ENCODE measurements at regions of chr17 and their contacts with region 1.

Region 1: DNA sequence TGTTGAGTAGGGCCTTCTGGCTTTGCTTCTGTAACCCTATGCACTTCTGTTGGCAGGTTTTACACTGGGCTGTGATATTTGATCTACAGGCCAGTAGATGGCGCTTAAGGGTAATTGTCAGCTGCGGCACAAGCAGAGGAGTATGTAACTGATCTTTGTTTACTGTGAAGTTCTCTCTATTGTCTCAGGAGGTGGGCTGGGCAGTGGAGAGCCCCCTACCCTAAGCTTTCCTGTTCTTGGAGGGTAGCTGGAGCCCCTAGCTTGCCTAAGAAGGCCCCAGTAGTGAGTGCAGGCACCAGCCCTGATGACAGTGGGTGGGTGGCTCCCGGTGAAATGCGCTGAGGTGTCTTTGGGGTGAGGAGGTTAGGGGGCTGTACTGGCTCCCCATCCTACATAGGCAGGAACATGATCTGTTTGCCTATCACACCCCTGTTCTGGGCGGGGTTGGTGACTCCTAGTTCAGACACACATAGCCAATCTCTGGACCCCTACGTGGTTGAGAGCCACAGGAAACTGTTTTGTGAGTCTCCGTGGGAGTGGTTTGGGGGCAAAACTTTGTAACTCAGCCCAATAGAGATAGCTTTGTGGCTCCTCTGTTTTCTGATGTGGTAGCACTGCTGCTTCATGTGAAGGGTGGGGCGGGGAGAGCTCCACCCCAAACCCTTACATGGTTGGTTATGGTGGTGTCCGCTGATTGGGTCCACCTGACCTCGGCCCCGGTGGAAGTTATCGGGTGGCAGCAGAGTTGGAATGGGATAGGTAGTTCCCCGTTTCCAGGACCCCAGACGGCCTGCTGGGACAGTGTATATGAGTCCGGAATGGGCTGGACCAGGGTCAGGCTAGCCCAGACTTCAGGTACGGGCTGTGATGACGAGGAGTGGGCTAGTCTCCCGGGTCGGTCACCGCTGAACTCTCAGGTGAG is 60.4 kb downstream of the SLFN11 start:
- DNase-seq: peak; percentile 77 to 99 (median 88)
- ATAC-seq: peak; percentile 92
- H3K4me3 ChIP-seq: peak overlapping the region; percentile 73 to 84
- H3K4me3 Mint-ChIP-seq: peak overlapping the region; percentile 97
- H3K27ac ChIP-seq: peak overlapping the region; percentile 75 to 86
- H3K27ac Mint-ChIP-seq: peak overlapping the region; percentile 98
- H3K4me1 ChIP-seq: peaks cover 26% of the 10 kb centered on the region
- H3K4me1 Mint-ChIP-seq: peaks cover 57% of the 10 kb centered on the region
- H3K27me3 ChIP-seq: no peaks in the 10 kb centered on the region
- H3K27me3 Mint-ChIP-seq: no peaks in the 10 kb centered on the region
- CTCF ChIP-seq: peak; percentile 88

Region 2: DNA sequence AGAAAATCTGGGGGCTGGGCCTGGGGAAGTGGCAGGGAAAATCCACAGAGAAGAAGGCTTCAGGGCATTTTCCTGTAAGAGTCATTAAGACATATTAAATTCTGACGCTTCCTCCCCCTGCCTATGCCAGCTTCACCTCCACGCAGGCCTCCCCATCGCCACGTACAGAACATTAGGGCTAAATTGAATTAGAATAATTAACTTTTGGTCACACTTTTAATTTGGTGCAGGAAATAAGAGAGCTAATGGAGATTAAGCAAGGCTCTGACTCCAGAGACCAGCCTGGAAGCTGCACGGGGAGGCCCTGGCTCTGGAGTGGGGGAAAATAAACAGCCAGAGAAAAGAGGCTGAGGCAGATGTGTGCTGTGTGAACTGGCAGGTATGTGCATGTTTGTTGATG is 499.8 kb before region 1 on chr17:
- CTCF ChIA-PET with region 1: no interaction called
- POLR2A ChIA-PET with region 1: no interaction called
- intact Hi-C with region 1: no loop called
- DNase-seq: no peak
- ATAC-seq: no peak
- H3K4me3 ChIP-seq: no peak overlapping the region
- H3K4me3 Mint-ChIP-seq: no peak overlapping the region
- H3K27ac ChIP-seq: no peak overlapping the region
- H3K27ac Mint-ChIP-seq: no peak overlapping the region
- H3K4me1 ChIP-seq: no peaks in the 10 kb centered on the region
- H3K4me1 Mint-ChIP-seq: no peaks in the 10 kb centered on the region
- H3K27me3 ChIP-seq: no peaks in the 10 kb centered on the region
- H3K27me3 Mint-ChIP-seq: no peaks in the 10 kb centered on the region
- CTCF ChIP-seq: no peak

Region 3: DNA sequence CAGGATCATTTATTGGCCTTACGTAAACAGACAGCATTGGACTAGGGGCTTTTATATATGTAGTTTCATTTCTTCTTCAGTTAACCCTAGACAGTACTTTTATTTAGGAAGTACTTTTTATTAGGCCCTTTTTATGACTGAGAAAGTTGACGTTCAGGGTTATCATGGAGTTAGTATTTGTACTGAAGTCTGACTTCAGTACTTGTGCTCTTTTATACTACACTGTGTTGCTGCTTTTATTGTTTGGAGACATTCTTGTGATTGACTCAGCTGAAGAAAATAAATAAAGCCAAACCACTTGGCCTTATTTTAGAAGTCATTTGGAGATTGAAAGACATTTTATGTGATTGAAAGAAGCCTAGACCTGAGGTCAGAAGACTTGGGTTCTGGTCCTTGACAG is 325.8 kb before region 1 on chr17:
- CTCF ChIA-PET with region 1: no interaction called
- POLR2A ChIA-PET with region 1: no interaction called
- intact Hi-C with region 1: no loop called
- DNase-seq: no peak
- ATAC-seq: no peak
- H3K4me3 ChIP-seq: no peak overlapping the region
- H3K4me3 Mint-ChIP-seq: no peak overlapping the region
- H3K27ac ChIP-seq: no peak overlapping the region
- H3K27ac Mint-ChIP-seq: no peak overlapping the region
- H3K4me1 ChIP-seq: peaks cover 7% of the 10 kb centered on the region
- H3K4me1 Mint-ChIP-seq: peaks cover 36% of the 10 kb centered on the region
- H3K27me3 ChIP-seq: no peaks in the 10 kb centered on the region
- H3K27me3 Mint-ChIP-seq: no peaks in the 10 kb centered on the region
- CTCF ChIP-seq: no peak

Region 4: DNA sequence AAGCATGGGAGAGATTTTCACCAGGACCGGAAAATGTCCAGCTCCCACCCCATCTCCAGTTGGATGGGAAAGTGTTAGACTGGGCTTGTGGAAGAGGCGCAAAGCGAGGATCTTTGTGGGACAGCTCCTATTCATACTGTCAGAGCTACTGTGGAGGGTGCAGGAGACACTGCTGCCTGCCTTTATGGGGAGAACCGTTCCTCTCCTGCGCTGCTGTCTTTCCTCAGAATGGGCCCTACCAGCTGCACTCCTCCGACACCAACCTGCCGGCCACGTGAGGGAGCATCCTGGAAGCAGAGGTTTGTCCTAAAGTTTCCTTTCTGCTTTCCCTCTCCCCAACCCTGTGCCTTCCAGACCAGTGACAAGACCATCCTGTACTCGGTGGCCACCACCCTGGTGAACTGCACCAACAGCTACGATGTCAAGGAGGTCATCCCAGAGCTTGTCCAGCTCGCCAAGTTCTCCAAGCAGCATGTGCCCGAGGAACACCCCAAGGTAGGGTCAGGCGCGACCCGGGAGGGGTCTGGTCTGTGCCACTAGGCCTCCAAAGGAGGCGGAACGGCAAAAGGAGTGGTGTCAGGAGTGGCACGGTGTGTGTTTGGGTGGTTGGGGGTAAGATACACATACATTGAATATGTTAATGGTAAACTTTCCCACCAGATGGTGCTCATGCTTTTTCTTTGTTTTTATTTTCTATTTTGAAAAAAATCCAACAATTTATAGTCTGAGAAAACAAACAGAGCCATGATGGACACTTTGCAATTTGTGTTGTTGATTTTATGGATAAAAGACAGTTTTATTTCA is 141.9 kb before region 1 on chr17:
- CTCF ChIA-PET with region 1: interaction called, 12 read pairs
- POLR2A ChIA-PET with region 1: no interaction called
- intact Hi-C with region 1: loop called (anchors 1 to 2 kb)
- DNase-seq: peak in 5 of 9 experiments; percentile 31 to 70 (median 62)
- ATAC-seq: peak; percentile 79
- H3K4me3 ChIP-seq: peak overlapping the region; percentile 10 to 31
- H3K4me3 Mint-ChIP-seq: peak overlapping the region; percentile 57
- H3K27ac ChIP-seq: peak overlapping the region in 1 of 2 experiments; percentile 51
- H3K27ac Mint-ChIP-seq: peak overlapping the region; percentile 90
- H3K4me1 ChIP-seq: peaks cover 37% of the 10 kb centered on the region
- H3K4me1 Mint-ChIP-seq: peaks cover 46% of the 10 kb centered on the region
- H3K27me3 ChIP-seq: no peaks in the 10 kb centered on the region
- H3K27me3 Mint-ChIP-seq: no peaks in the 10 kb centered on the region
- CTCF ChIP-seq: peak; percentile 69

Region 5: GRCh38 chr17:35265566-35266141 is 47.4 kb before region 1 on chr17:
- CTCF ChIA-PET with region 1: interaction called, 6 read pairs
- POLR2A ChIA-PET with region 1: interaction called, 22 read pairs
- intact Hi-C with region 1: no loop called
- DNase-seq: no peak
- ATAC-seq: no peak
- H3K4me3 ChIP-seq: no peak overlapping the region
- H3K4me3 Mint-ChIP-seq: peak overlapping the region; percentile 13
- H3K27ac ChIP-seq: peak overlapping the region in 1 of 2 experiments; percentile 22
- H3K27ac Mint-ChIP-seq: peak overlapping the region; percentile 91
- H3K4me1 ChIP-seq: peaks cover 74% of the 10 kb centered on the region
- H3K4me1 Mint-ChIP-seq: peaks cover 74% of the 10 kb centered on the region
- H3K27me3 ChIP-seq: no peaks in the 10 kb centered on the region
- H3K27me3 Mint-ChIP-seq: no peaks in the 10 kb centered on the region
- CTCF ChIP-seq: no peak

Region 6: GRCh38 chr17:35345926-35346771 is 33.1 kb after region 1 on chr17:
- CTCF ChIA-PET with region 1: interaction called, 6 read pairs
- POLR2A ChIA-PET with region 1: no interaction called
- intact Hi-C with region 1: loop called (anchors 1 to 2 kb)
- DNase-seq: peak in 7 of 9 experiments; percentile 15 to 70 (median 36)
- ATAC-seq: peak; percentile 63
- H3K4me3 ChIP-seq: peak overlapping the region; percentile 51 to 62
- H3K4me3 Mint-ChIP-seq: peak overlapping the region; percentile 92
- H3K27ac ChIP-seq: peak overlapping the region in 1 of 2 experiments; percentile 54
- H3K27ac Mint-ChIP-seq: peak overlapping the region; percentile 70
- H3K4me1 ChIP-seq: peaks cover 28% of the 10 kb centered on the region
- H3K4me1 Mint-ChIP-seq: peaks cover 50% of the 10 kb centered on the region
- H3K27me3 ChIP-seq: no peaks in the 10 kb centered on the region
- H3K27me3 Mint-ChIP-seq: no peaks in the 10 kb centered on the region
- CTCF ChIP-seq: no peak

Region 7: GRCh38 chr17:35486920-35487732 is 174.1 kb after region 1 on chr17:
- CTCF ChIA-PET with region 1: interaction called, 19 read pairs
- POLR2A ChIA-PET with region 1: interaction called, 25 read pairs
- intact Hi-C with region 1: loop called (anchors 1 to 5 kb)
- DNase-seq: peak; percentile 31 to 90 (median 75)
- ATAC-seq: peak; percentile 67
- H3K4me3 ChIP-seq: peak overlapping the region; percentile 77 to 86
- H3K4me3 Mint-ChIP-seq: peak overlapping the region; percentile 90
- H3K27ac ChIP-seq: peak overlapping the region; percentile 83 to 88
- H3K27ac Mint-ChIP-seq: peak overlapping the region; percentile 98
- H3K4me1 ChIP-seq: peaks cover 28% of the 10 kb centered on the region
- H3K4me1 Mint-ChIP-seq: peaks cover 58% of the 10 kb centered on the region
- H3K27me3 ChIP-seq: no peaks in the 10 kb centered on the region
- H3K27me3 Mint-ChIP-seq: no peaks in the 10 kb centered on the region
- CTCF ChIP-seq: no peak

Region 8: DNA sequence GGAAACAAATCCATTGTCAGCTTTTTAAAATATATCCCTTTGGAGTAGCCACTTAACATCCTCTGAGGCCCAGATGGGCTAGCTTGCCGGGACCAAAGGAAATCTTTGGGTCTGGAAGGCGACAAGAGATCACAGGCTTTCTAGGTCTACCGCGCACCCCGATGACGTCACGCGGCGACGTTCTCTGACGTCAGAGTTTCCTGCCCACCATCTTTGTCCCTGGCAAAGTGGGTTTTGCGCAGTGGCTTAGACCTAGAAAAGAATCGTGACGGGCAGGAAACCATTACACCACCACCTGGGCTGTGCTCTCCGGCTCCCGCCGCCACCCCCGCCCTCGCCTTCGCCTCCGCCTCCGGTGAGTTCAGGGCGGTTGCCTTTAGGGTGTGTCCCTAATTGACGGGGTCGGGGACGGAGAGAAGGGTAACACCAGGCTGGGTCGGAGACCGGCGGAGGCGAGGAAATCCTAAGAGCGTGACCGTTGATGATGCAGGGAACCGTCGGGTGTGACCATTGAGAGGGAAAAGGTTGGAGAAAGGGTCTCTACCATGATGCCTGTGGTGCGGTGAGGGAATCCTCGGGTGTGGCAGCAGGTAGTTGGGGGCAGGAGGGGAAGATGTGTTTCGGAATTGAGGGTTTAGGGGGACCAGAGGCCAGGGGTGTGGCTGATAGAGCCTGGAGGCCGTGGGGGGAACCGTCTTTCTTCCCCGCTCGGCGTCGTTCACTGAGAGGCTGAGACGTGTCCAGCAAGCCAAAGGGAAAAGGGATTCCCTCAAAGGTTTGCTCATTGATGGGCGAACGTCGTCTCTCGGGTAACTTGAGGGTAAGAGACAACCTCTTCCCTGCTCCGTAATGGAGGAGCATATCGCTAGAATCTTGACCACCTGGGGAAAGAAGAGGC is 274.3 kb after region 1 on chr17 and contains the start of gene AP2B1:
- CTCF ChIA-PET with region 1: no interaction called
- POLR2A ChIA-PET with region 1: interaction called, 4 read pairs
- intact Hi-C with region 1: loop called (anchors 1 kb)
- DNase-seq: peak; percentile 96 to 100 (median 97)
- ATAC-seq: peak; percentile 98
- H3K4me3 ChIP-seq: peak within 1 kb of the TSS; percentile 84 to 92
- H3K4me3 Mint-ChIP-seq: peak within 1 kb of the TSS; percentile 99
- H3K27ac ChIP-seq: peak within 1 kb of the TSS; percentile 86 to 93
- H3K27ac Mint-ChIP-seq: peak within 1 kb of the TSS; percentile 98
- H3K4me1 ChIP-seq: peaks cover 21% of the 10 kb centered on the region
- H3K4me1 Mint-ChIP-seq: peaks cover 38% of the 10 kb centered on the region
- H3K27me3 ChIP-seq: no peaks in the 10 kb centered on the region
- H3K27me3 Mint-ChIP-seq: no peaks in the 10 kb centered on the region
- CTCF ChIP-seq: no peak
- total RNA-seq, gene AP2B1: 58.7 to 65.7 TPM